Activated CD8-positive, alpha-beta T cell treated with anti-CD3 and anti-CD28 coated beads, Interleukin-2, amount 10 ng/mL, durations not matched to agents 7 days and 5 days (primary cell): ENCODE measurements at regions of chr11 and their contacts with region 1.

Region 1: DNA sequence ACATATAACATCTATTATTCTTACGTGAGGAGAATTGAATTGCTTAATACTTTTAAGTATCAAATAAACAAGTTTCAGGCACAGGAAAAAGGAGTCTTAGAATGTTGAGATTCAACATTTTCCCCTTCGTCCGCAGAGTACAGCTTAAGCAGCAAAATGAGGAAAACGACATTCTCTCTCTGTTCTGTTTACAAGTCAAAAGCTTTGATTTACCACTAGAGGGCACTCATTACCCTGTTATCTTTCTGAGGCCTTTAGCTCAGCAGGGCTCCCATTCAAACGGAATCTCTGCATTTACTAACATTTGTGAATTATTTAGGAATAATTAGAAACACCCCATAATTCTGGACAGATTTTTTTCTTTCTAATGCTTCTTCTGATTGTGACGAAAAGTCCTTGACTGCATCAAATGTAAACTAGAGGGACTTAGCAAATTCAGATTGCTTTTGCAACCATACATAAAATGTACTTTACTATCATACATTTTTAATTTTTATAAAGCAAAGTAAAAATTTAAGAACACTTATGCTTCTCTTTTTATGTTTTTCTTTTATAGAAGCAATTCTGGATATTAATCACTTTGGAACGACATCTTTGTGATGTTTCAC is 75.0 kb downstream of the JRKL start:
- DNase-seq: no peak
- ATAC-seq: peak; percentile 77
- H3K4me3 Mint-ChIP-seq: no peak overlapping the region
- H3K27ac Mint-ChIP-seq: no peak overlapping the region
- H3K4me1 Mint-ChIP-seq: no peaks in the 10 kb centered on the region
- H3K27me3 Mint-ChIP-seq: peaks cover 4% of the 10 kb centered on the region

Region 2: DNA sequence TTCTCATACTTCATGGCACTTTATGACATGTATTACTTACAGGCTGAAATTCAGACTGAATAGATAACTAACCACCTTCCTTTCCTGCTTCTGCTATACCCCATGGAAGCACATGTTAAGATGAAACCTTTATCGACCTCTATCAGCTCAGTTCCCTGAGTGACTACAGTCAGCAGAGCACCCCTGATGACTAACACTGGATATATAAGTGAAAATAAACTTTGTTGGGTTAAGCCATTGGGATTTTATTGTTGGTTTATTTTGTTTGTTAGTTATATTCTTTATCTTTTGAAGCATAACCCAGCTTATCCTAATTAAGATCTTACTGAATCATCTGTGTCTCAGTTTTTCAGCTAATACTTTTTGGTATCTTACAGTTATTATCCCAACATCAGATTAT is 98.8 kb before region 1 on chr11:
- CTCF ChIA-PET with region 1: no interaction called
- POLR2A ChIA-PET with region 1: no interaction called
- DNase-seq: no peak
- ATAC-seq: no peak
- H3K4me3 Mint-ChIP-seq: no peak overlapping the region
- H3K27ac Mint-ChIP-seq: no peak overlapping the region
- H3K4me1 Mint-ChIP-seq: no peaks in the 10 kb centered on the region
- H3K27me3 Mint-ChIP-seq: no peaks in the 10 kb centered on the region

Region 3: DNA sequence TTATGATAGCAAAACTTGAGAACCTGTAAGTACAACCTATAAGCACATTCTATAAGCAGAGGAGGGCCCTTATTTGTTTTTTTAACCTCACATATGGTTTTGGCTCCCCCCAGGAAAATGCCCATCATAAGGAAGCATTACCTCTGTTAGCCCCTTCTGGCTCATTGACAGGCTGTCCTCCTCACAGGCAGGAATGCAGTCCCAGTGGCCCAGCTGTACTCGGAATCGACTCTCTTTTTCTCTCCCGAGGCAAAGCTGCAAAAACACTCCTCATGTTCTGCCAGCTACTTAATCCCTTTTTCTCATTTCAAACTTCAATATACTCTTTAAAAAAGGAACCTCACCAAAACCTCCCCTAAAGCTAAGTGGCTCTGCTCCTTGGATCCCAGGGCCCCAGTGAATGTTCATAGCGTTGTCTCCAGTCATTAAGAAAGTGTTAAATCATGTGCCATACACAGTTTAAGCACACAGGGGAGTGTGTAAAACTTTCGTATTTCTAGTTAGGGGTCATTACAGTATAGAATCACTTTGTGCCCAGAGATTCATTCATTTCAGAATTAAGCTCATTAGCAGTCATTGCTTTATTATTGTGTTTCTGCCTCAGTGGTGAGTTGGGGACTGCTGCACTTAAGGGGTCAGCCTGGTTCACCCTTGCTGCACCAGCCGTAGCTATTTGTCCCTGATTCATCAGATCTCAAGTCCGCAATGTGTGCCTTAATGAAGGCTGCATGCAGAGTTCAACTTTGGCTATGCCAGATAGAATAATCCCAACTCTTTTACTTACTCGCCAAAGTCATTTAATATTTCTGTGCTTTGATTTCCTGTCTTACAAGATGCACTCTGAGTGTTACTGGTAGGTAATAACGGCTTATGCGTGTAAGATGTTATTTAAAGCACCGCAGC is 17.3 kb before region 1 on chr11:
- CTCF ChIA-PET with region 1: interaction called, 11 read pairs
- POLR2A ChIA-PET with region 1: no interaction called
- DNase-seq: no peak
- ATAC-seq: no peak
- H3K4me3 Mint-ChIP-seq: no peak overlapping the region
- H3K27ac Mint-ChIP-seq: no peak overlapping the region
- H3K4me1 Mint-ChIP-seq: no peaks in the 10 kb centered on the region
- H3K27me3 Mint-ChIP-seq: peaks cover 17% of the 10 kb centered on the region

Region 4: GRCh38 chr11:96481771-96482170 is 17.0 kb after region 1 on chr11:
- CTCF ChIA-PET with region 1: interaction called, 22 read pairs
- POLR2A ChIA-PET with region 1: no interaction called
- DNase-seq: no peak
- ATAC-seq: no peak
- H3K4me3 Mint-ChIP-seq: no peak overlapping the region
- H3K27ac Mint-ChIP-seq: no peak overlapping the region
- H3K4me1 Mint-ChIP-seq: no peaks in the 10 kb centered on the region
- H3K27me3 Mint-ChIP-seq: peaks cover 2% of the 10 kb centered on the region

Region 5: DNA sequence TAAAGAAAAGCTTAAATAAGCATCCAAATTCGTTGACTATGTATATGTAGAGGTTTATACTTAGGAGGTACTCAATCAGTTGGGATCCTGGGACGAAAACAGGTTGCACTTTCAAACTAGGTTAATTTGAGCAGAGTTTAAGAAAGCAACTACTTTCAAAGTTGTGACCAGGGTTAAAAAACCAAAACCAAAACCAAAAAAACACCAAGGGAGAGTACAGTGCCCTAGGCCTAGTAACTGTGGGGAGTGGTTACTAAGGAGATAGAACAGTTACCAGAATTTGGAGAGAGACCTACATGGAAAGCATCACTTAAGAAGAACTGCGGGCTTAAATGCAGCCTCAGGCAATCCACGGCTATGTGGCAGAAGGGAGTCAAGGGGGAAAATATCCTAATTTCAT is 73.3 kb after region 1 on chr11:
- CTCF ChIA-PET with region 1: no interaction called
- POLR2A ChIA-PET with region 1: no interaction called
- DNase-seq: no peak
- ATAC-seq: no peak
- H3K4me3 Mint-ChIP-seq: no peak overlapping the region
- H3K27ac Mint-ChIP-seq: no peak overlapping the region
- H3K4me1 Mint-ChIP-seq: no peaks in the 10 kb centered on the region
- H3K27me3 Mint-ChIP-seq: no peaks in the 10 kb centered on the region

Region 6: DNA sequence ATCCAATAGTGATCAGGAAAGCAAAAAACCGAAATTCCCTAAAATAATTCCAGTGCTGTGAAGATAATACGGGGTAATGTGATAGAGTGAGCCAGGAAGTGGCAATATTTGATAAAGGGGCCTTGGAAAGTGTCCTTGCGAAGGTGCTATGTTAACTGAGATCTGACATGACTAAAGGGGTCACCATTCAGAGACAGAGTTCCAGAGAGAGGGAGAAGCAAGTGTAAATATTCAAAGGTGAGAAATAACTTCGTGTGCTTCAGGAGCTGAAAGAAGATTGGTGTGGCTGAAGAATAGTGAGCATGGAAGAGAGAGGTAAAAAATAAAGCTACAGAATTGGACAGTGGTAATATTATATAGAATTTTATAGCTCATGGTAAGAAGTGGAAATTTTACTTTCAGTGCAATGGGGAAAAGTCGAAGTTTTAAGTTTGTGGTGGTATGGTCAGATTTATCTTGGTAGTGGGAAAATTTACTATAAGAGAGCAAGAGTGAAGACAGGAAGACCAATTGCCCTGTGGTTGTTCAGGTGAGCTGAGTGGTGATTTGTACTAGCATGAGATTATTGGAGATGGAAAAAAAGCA is 89.5 kb after region 1 on chr11:
- CTCF ChIA-PET with region 1: interaction called, 14 read pairs
- POLR2A ChIA-PET with region 1: no interaction called
- DNase-seq: no peak
- ATAC-seq: no peak
- H3K4me3 Mint-ChIP-seq: no peak overlapping the region
- H3K27ac Mint-ChIP-seq: no peak overlapping the region
- H3K4me1 Mint-ChIP-seq: no peaks in the 10 kb centered on the region
- H3K27me3 Mint-ChIP-seq: no peaks in the 10 kb centered on the region

Region 7: GRCh38 chr11:96658436-96658835 is 193.6 kb after region 1 on chr11:
- CTCF ChIA-PET with region 1: no interaction called
- POLR2A ChIA-PET with region 1: no interaction called
- DNase-seq: no peak
- ATAC-seq: no peak
- H3K4me3 Mint-ChIP-seq: no peak overlapping the region
- H3K27ac Mint-ChIP-seq: no peak overlapping the region
- H3K4me1 Mint-ChIP-seq: no peaks in the 10 kb centered on the region
- H3K27me3 Mint-ChIP-seq: no peaks in the 10 kb centered on the region

Region 8: GRCh38 chr11:96715208-96715607 is 250.4 kb after region 1 on chr11:
- CTCF ChIA-PET with region 1: no interaction called
- POLR2A ChIA-PET with region 1: no interaction called
- DNase-seq: no peak
- ATAC-seq: no peak
- H3K4me3 Mint-ChIP-seq: no peak overlapping the region
- H3K27ac Mint-ChIP-seq: no peak overlapping the region
- H3K4me1 Mint-ChIP-seq: no peaks in the 10 kb centered on the region
- H3K27me3 Mint-ChIP-seq: no peaks in the 10 kb centered on the region